Body of pancreas (tissue), 4 donors: ENCODE measurements at regions of chr15 and their contacts with region 1.

Region 1: DNA sequence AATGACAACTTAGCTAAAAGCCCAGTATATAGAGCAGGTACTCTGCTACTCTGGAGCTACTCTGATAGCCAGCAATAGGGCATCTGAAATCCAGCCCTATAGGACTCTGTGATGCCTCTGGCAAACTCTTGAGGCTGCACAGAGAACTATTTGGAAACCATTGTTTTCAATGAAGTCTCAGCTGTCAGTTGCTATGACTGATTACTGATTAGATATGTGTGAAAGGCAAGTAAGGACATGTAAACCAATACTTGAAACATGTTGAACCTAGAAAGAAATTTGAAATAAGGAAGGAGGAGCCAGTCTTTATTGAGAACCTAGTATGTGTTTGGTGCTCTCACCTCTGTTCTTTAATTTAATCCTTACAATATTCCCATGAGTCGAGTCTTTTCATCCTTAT is 40.2 kb upstream of the CRTC3 start:
- DNase-seq: no peak
- ATAC-seq: no peak
- H3K4me3 ChIP-seq: no peak overlapping the region
- H3K27ac ChIP-seq: no peak overlapping the region
- H3K4me1 ChIP-seq: no peaks in the 10 kb centered on the region
- H3K27me3 ChIP-seq: no peaks in the 10 kb centered on the region
- CTCF ChIP-seq: no peak
- POLR2A ChIP-seq: no peak

Region 2: DNA sequence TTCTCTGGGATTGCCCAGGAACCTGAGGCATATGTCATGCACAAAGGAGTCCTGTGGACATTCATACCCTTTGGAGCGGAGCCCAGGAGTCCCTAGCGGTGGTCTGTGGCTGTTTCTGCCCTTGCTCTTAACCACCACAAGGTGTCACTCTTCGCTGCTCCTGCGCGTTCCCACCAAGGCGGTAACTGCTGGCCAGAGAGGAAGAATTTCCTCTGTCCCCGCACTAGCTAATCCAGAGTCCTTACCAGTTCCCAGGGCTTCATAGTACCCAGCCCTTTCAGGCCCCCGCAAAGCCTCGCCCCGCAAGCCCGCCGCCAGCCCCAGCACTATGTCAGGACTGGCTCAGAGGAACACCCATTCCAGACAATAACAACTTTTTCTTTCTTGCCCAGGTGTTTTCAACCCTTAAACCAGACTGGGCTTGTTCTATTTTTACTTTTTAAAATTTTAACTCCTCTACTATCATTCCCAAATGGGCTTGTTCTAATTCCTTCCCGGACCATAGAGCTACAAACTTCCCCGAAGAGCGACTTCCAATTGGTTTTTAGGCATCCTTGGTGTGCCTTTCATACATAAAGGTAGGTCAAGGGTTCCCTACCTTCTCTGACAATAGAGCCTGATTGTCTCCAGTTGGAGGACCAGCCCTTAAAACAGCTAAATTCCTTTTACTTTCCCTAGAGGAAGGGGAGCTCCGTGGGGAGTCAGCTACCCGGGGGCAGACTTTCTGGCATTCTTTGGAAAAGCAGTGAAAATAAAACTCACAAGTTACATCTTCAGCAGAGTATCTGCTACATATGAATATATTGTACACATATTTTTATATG is 169.2 kb before region 1 on chr15:
- intact Hi-C with region 1: loop called (anchors 5 kb)
- DNase-seq: peak; percentile 82 to 91 (median 90)
- ATAC-seq: peak; percentile 75
- H3K4me3 ChIP-seq: no peak overlapping the region
- H3K27ac ChIP-seq: peak overlapping the region in 3 of 4 donors; percentile 33 to 58 (median 50)
- H3K4me1 ChIP-seq: peaks cover 35% of the 10 kb centered on the region
- H3K27me3 ChIP-seq: no peaks in the 10 kb centered on the region
- CTCF ChIP-seq: peak; percentile 93 to 100 (median 100)
- POLR2A ChIP-seq: no peak

Region 3: GRCh38 chr15:90394748-90395442 is 94.6 kb before region 1 on chr15:
- intact Hi-C with region 1: no loop called
- DNase-seq: no peak
- ATAC-seq: no peak
- H3K4me3 ChIP-seq: no peak overlapping the region
- H3K27ac ChIP-seq: peak overlapping the region in 2 of 4 donors; percentile 1 to 17
- H3K4me1 ChIP-seq: peaks cover 39% of the 10 kb centered on the region
- H3K27me3 ChIP-seq: no peaks in the 10 kb centered on the region
- CTCF ChIP-seq: no peak
- POLR2A ChIP-seq: no peak

Region 4: GRCh38 chr15:90435652-90436337 is 53.7 kb before region 1 on chr15:
- intact Hi-C with region 1: no loop called
- DNase-seq: no peak
- ATAC-seq: no peak
- H3K4me3 ChIP-seq: no peak overlapping the region
- H3K27ac ChIP-seq: no peak overlapping the region
- H3K4me1 ChIP-seq: peaks cover 16% of the 10 kb centered on the region
- H3K27me3 ChIP-seq: no peaks in the 10 kb centered on the region
- CTCF ChIP-seq: no peak
- POLR2A ChIP-seq: no peak